Activated CD4-positive, alpha-beta T cell treated with anti-CD3 and anti-CD28 coated beads, Interleukin-2, amount 10 ng/mL, durations not matched to agents 24 days and 14 days (primary cell): ENCODE measurements at regions of chr10 and their contacts with region 1.

Region 1: GRCh38 chr10:63083904-63084689 is 49.0 kb upstream of the NRBF2 start:
- DNase-seq: peak; percentile 79
- H3K4me3 Mint-ChIP-seq: no peak overlapping the region
- H3K27ac Mint-ChIP-seq: no peak overlapping the region
- H3K4me1 Mint-ChIP-seq: no peaks in the 10 kb centered on the region
- H3K27me3 Mint-ChIP-seq: peaks cover 33% of the 10 kb centered on the region

Region 2: DNA sequence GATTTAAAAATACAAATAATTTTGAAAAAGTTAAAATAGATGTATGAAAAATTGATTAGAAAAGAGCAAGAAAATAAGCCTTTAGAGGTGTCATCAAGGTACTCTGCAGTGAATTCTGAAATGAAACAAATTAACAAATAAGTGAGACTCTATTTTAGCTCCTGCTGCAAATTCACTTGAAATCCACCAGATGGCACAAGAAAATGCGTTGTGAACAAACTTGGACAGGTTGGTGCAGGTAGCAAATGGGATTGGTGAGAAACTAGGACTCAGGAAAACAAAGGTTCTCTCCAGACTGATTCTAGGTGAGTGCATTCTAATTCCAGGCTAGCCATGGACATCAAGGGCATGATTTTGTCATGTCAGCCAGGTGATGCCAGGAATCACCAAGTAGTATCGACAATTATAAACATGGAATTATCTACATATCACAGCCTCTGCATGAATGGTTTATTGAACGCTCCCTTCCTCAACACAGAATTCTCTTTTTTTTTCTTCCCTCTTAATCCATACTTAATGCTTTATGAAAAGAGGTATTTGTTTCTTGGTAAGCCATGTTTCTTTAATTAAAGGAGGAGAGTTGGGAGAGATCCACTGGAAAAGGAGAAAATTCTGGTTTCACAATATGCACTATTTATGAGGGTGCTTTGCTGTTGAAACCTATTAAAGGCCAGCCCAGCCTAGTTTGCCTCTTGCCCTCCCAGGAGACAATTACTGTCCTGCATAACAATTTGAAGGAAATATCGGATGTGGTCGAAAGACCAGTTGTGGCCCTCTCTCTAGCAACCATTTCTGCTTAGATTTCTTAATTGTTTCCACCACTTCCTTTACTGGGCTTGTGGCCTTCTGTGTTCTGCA is 591.9 kb before region 1 on chr10:
- intact Hi-C with region 1: loop called (anchors 5 kb)
- DNase-seq: peak; percentile 62
- H3K4me3 Mint-ChIP-seq: no peak overlapping the region
- H3K27ac Mint-ChIP-seq: no peak overlapping the region
- H3K4me1 Mint-ChIP-seq: no peaks in the 10 kb centered on the region
- H3K27me3 Mint-ChIP-seq: peaks cover 18% of the 10 kb centered on the region

Region 3: GRCh38 chr10:62594093-62594520 is 490.0 kb before region 1 on chr10:
- intact Hi-C with region 1: loop called (anchors 2 kb)
- DNase-seq: peak; percentile 86
- H3K4me3 Mint-ChIP-seq: no peak overlapping the region
- H3K27ac Mint-ChIP-seq: no peak overlapping the region
- H3K4me1 Mint-ChIP-seq: peaks cover 3% of the 10 kb centered on the region
- H3K27me3 Mint-ChIP-seq: peaks cover 22% of the 10 kb centered on the region